CD8-positive, alpha-beta T cell (primary cell): ENCODE measurements at regions of chr18 and their contacts with region 1.

Region 1: DNA sequence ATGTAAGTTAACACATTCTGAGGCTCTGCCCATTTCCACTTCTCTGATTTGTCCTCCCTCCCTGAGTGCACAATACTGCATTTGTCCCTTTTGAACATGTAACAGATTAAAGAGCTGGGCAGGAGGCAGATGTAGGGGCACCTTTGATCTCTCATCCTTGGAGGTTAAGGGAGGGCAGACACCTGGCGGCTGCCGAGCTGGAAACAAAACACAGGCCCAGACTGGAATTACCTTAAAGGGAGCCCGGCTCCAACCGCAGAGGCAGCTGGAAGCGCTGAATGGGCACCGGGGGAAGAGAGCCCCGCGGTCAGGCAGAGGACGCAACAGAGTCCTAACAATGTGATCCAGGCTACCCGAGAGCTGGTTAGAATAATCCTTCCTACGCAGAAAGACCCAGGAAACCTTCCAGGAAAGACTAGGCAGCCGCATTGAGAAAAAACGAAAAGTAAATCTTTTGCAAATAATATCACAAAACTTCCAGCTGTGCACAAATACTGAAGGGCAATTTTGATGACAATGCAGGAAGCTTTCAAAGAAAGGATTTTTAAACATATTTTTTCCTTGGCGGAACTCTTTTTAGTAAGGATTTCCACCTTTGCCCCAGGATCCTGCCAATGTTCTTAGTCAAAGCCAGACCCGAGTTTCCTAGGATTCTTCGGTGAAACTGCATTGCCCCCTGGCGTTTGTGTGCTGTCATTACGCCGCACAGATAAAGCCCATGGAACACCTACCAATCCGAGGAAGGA is 216.0 kb downstream of the TGIF1 start:
- DNase-seq: peak; percentile 39 to 83 (median 75)
- ATAC-seq: peak; percentile 91
- H3K4me3 ChIP-seq: no peak overlapping the region
- H3K4me3 Mint-ChIP-seq: peak overlapping the region; percentile 35
- H3K27ac ChIP-seq: no peak overlapping the region
- H3K27ac Mint-ChIP-seq: no peak overlapping the region
- H3K4me1 ChIP-seq: no peaks in the 10 kb centered on the region
- H3K4me1 Mint-ChIP-seq: peaks cover 8% of the 10 kb centered on the region
- H3K27me3 ChIP-seq: no peaks in the 10 kb centered on the region
- H3K27me3 Mint-ChIP-seq: peaks cover 2% of the 10 kb centered on the region
- CTCF ChIP-seq: peak; percentile 96

Region 2: GRCh38 chr18:2994603-2995432 is 671.1 kb before region 1 on chr18:
- CTCF ChIA-PET with region 1: interaction called, 4 read pairs
- POLR2A ChIA-PET with region 1: no interaction called
- intact Hi-C with region 1: loop called in 1 of 2 experiments (anchors 10 kb)
- DNase-seq: peak; percentile 50 to 87 (median 76)
- ATAC-seq: peak; percentile 92
- H3K4me3 ChIP-seq: peak overlapping the region in 1 of 2 experiments; percentile 22
- H3K4me3 Mint-ChIP-seq: peak overlapping the region; percentile 56
- H3K27ac ChIP-seq: no peak overlapping the region
- H3K27ac Mint-ChIP-seq: peak overlapping the region; percentile 78
- H3K4me1 ChIP-seq: peaks cover 46% of the 10 kb centered on the region
- H3K4me1 Mint-ChIP-seq: peaks cover 69% of the 10 kb centered on the region
- H3K27me3 ChIP-seq: no peaks in the 10 kb centered on the region
- H3K27me3 Mint-ChIP-seq: no peaks in the 10 kb centered on the region
- CTCF ChIP-seq: peak; percentile 72

Region 3: DNA sequence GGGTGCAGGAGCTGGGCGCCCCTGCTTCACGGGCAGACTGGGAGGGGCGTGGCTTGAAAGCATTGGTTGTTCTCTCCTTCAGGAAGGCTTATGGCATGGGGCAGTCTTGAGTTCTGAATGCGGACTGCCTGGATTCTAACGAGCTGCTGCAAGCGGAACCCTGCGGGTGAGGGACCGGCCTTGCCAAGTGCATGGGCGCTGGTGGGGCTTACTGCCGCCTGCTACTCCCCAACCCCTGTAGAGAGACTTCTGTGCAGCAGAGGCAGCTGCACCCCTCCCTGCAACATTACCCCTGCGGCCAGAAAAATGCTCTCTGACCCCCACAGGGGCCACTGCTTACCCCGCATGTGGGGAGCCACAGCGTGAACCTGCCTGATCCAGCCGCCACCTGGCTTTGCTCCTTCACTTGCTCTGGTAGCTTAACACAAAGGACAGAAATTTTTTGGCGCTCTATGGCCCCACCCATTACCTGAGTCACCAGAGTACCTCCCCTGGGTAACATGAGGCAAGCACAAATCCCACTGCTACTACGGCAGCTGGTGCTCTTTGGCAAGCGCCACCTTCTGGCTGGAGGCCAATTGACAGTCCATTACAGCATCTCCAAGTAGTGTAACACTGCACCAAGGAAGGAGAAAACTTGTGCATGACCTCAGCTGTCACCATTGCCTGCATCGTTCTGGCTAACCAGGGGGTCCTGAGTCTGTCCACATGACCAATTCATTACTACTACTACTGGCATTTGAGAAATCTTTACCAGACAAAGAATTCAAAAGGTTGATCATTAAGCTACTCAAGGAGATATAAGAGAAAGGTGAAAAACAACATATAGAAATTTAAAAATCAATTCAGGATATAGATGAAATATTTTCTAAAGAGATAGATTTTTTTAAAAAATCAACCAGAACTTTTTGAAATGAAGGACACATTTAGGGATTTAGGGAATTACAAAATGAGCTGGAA is 368.6 kb before region 1 on chr18:
- CTCF ChIA-PET with region 1: interaction called, 80 read pairs
- POLR2A ChIA-PET with region 1: no interaction called
- intact Hi-C with region 1: loop called in 1 of 2 experiments (anchors 1 kb)
- DNase-seq: peak; percentile 86 to 95 (median 93)
- ATAC-seq: peak; percentile 98
- H3K4me3 ChIP-seq: peak overlapping the region; percentile 71 to 87
- H3K4me3 Mint-ChIP-seq: peak overlapping the region; percentile 92
- H3K27ac ChIP-seq: peak overlapping the region; percentile 51 to 58
- H3K27ac Mint-ChIP-seq: peak overlapping the region; percentile 86
- H3K4me1 ChIP-seq: peaks cover 7% of the 10 kb centered on the region
- H3K4me1 Mint-ChIP-seq: peaks cover 8% of the 10 kb centered on the region
- H3K27me3 ChIP-seq: peaks cover 0 to 2% of the 10 kb centered on the region in 2 experiments
- H3K27me3 Mint-ChIP-seq: peaks cover 27% of the 10 kb centered on the region
- CTCF ChIP-seq: peak; percentile 79

Region 4: DNA sequence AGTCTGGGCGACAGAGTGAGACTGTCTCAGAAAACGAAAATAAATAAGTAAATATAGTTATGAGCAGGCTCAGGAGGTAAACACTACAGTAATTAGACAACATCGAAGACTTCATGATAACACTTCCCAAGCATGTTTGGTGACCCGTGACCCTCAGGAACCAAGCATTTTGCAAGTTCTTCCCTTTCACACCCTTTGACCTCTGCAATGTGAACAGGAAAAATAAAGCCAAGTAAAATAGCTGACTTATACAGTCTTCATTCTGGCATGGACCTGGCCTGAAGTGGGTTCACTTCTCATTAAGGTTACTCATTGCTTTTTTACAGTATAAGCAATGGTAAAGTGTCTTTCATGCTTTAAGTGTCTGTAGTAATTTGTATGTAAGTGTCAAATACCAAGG is 231.3 kb before region 1 on chr18:
- CTCF ChIA-PET with region 1: interaction called, 10 read pairs
- POLR2A ChIA-PET with region 1: no interaction called
- intact Hi-C with region 1: no loop called
- DNase-seq: no peak
- ATAC-seq: no peak
- H3K4me3 ChIP-seq: no peak overlapping the region
- H3K4me3 Mint-ChIP-seq: no peak overlapping the region
- H3K27ac ChIP-seq: no peak overlapping the region
- H3K27ac Mint-ChIP-seq: no peak overlapping the region
- H3K4me1 ChIP-seq: no peaks in the 10 kb centered on the region
- H3K4me1 Mint-ChIP-seq: no peaks in the 10 kb centered on the region
- H3K27me3 ChIP-seq: no peaks in the 10 kb centered on the region
- H3K27me3 Mint-ChIP-seq: no peaks in the 10 kb centered on the region
- CTCF ChIP-seq: no peak

Region 5: GRCh38 chr18:3466045-3466444 is 199.9 kb before region 1 on chr18:
- CTCF ChIA-PET with region 1: interaction called, 25 read pairs
- POLR2A ChIA-PET with region 1: no interaction called
- intact Hi-C with region 1: no loop called
- DNase-seq: no peak
- ATAC-seq: no peak
- H3K4me3 ChIP-seq: no peak overlapping the region
- H3K4me3 Mint-ChIP-seq: no peak overlapping the region
- H3K27ac ChIP-seq: no peak overlapping the region
- H3K27ac Mint-ChIP-seq: no peak overlapping the region
- H3K4me1 ChIP-seq: peaks cover 16% of the 10 kb centered on the region
- H3K4me1 Mint-ChIP-seq: peaks cover 20% of the 10 kb centered on the region
- H3K27me3 ChIP-seq: no peaks in the 10 kb centered on the region
- H3K27me3 Mint-ChIP-seq: no peaks in the 10 kb centered on the region
- CTCF ChIP-seq: no peak

Region 6: DNA sequence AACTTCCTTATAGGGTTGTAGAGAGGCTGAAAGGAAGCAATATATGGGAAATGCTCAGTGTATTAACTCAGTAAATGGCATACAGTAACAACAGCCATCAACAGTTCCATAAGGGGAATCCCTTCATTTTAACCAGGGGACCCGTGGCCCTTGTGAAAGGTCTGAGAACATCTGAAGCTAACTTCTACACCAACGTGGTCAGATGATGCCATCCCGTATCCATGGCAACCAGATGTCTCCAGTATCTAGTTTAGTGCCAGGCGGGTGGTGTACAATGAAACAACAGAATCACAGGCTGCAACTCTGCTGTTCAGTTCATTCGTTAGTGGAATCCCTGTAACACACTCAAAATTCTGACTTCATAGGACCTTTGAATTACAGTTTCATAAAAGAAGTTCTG is 53.6 kb before region 1 on chr18:
- CTCF ChIA-PET with region 1: interaction called, 21 read pairs
- POLR2A ChIA-PET with region 1: no interaction called
- intact Hi-C with region 1: no loop called
- DNase-seq: no peak
- ATAC-seq: no peak
- H3K4me3 ChIP-seq: no peak overlapping the region
- H3K4me3 Mint-ChIP-seq: no peak overlapping the region
- H3K27ac ChIP-seq: no peak overlapping the region
- H3K27ac Mint-ChIP-seq: no peak overlapping the region
- H3K4me1 ChIP-seq: peaks cover under 1% of the 10 kb centered on the region
- H3K4me1 Mint-ChIP-seq: peaks cover 10% of the 10 kb centered on the region
- H3K27me3 ChIP-seq: no peaks in the 10 kb centered on the region
- H3K27me3 Mint-ChIP-seq: no peaks in the 10 kb centered on the region
- CTCF ChIP-seq: no peak

Region 7: DNA sequence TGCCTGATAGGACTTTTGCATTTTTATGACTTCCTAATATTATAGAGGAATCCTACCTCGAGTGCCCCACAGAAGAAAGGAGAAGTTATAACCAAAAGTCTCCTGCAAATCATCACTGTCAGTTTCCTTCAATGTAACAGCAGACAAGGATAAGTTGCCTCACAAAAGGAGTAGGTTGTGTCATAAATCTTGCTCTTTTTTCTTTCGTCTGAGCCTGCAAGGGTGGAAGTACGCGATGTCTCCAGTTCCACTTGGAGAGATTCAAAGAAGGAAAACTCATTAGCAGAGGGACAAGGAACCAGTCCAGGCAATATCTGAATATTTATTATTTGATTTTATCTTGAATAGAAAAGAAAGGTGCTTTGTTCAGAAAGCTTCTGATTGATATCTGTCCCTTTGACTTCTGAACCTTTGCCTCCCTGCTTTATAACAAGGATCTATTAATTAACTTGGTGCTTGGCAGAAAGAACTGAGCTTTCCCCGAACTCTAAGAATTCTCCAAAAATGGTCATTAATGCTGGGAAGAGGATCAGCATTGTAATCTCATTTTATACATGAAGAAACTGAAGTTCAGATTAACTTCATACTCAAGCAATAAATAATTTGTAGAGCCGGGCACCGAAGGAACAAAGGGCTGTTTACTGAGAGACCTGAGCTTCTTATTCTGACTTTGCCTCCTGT is 56.5 kb after region 1 on chr18:
- CTCF ChIA-PET with region 1: no interaction called
- POLR2A ChIA-PET with region 1: no interaction called
- intact Hi-C with region 1: no loop called
- DNase-seq: no peak
- ATAC-seq: no peak
- H3K4me3 ChIP-seq: no peak overlapping the region
- H3K4me3 Mint-ChIP-seq: no peak overlapping the region
- H3K27ac ChIP-seq: no peak overlapping the region
- H3K27ac Mint-ChIP-seq: no peak overlapping the region
- H3K4me1 ChIP-seq: no peaks in the 10 kb centered on the region
- H3K4me1 Mint-ChIP-seq: no peaks in the 10 kb centered on the region
- H3K27me3 ChIP-seq: peaks cover 0 to 3% of the 10 kb centered on the region in 2 experiments
- H3K27me3 Mint-ChIP-seq: peaks cover 16% of the 10 kb centered on the region
- CTCF ChIP-seq: no peak

Region 8: DNA sequence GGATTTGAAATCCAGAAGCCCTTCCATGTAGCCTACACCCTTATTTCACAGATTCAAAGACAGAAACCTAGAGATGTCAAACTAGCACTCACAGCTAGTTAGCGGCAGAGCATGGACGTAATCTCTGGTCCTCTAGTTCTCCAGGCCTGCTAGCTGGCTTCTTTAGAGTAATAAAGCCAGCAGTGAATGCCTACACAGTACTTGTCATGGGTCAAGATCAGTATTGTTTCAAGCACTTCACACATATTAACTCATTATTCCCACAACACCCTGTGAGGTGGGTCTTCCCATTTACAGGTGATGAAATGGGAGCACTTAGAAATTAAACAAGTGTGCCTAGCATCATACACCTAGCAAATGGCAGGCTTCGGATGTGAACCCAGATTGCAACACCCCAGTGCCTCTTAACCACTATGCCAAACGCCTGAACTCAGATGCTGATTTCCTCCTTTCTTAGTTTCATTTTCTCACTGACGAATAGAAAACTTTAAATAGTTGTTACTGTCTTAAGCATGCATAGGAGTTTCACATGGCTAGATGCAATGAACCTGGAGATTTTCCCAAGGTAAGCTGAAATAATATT is 1644.0 kb after region 1 on chr18:
- CTCF ChIA-PET with region 1: no interaction called
- POLR2A ChIA-PET with region 1: no interaction called
- intact Hi-C with region 1: no loop called
- DNase-seq: peak in 8 of 9 experiments; percentile 17 to 77 (median 38)
- ATAC-seq: peak; percentile 93
- H3K4me3 ChIP-seq: peak overlapping the region; percentile 37 to 47
- H3K4me3 Mint-ChIP-seq: peak overlapping the region; percentile 88
- H3K27ac ChIP-seq: peak overlapping the region; percentile 28 to 78
- H3K27ac Mint-ChIP-seq: peak overlapping the region; percentile 92
- H3K4me1 ChIP-seq: peaks cover 18% of the 10 kb centered on the region
- H3K4me1 Mint-ChIP-seq: peaks cover 26% of the 10 kb centered on the region
- H3K27me3 ChIP-seq: no peaks in the 10 kb centered on the region
- H3K27me3 Mint-ChIP-seq: no peaks in the 10 kb centered on the region
- CTCF ChIP-seq: no peak

Region 9: DNA sequence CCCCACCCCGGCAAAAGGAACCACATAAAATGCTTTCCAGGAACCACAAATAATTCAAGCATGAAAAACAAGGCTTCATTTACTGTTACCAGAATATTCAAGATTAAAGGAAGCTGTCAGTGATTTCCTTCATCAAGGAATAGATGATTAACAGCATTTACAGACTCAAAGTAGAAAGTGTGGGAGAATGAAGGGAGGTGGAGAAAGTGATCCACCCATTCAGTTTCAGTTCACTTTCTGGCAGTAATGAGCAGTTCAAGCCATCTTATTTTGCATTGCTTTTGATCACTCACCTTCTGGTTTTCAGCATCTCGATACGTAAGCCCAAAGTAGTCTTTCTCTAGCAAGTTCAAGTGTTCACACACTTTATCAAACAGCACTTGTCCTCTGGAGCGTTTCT is 1778.9 kb after region 1 on chr18:
- CTCF ChIA-PET with region 1: no interaction called
- POLR2A ChIA-PET with region 1: no interaction called
- intact Hi-C with region 1: no loop called
- DNase-seq: no peak
- ATAC-seq: no peak
- H3K4me3 ChIP-seq: no peak overlapping the region
- H3K4me3 Mint-ChIP-seq: no peak overlapping the region
- H3K27ac ChIP-seq: no peak overlapping the region
- H3K27ac Mint-ChIP-seq: no peak overlapping the region
- H3K4me1 ChIP-seq: no peaks in the 10 kb centered on the region
- H3K4me1 Mint-ChIP-seq: no peaks in the 10 kb centered on the region
- H3K27me3 ChIP-seq: peaks cover 0 to 2% of the 10 kb centered on the region in 2 experiments
- H3K27me3 Mint-ChIP-seq: peaks cover under 1% of the 10 kb centered on the region
- CTCF ChIP-seq: no peak